ENCODE measurements at regions of chr10 and their contacts with region 1.

Region 1: GRCh38 chr10:97037365-97038361 is 148.1 kb downstream of the SLIT1 start:
- DNase-seq: peak; percentile 95
- ATAC-seq: peak; percentile 94
- H3K4me3 Mint-ChIP-seq: peak overlapping the region; percentile 45
- H3K27ac Mint-ChIP-seq: no peak overlapping the region
- H3K4me1 Mint-ChIP-seq: peaks cover 28% of the 10 kb centered on the region
- H3K27me3 Mint-ChIP-seq: peaks cover 5% of the 10 kb centered on the region
- CTCF ChIP-seq: peak; percentile 92

Region 2: GRCh38 chr10:96902731-96903358 is 134.8 kb before region 1 on chr10:
- CTCF ChIA-PET with region 1: no interaction called
- POLR2A ChIA-PET with region 1: no interaction called
- DNase-seq: no peak
- ATAC-seq: no peak
- H3K4me3 Mint-ChIP-seq: no peak overlapping the region
- H3K27ac Mint-ChIP-seq: no peak overlapping the region
- H3K4me1 Mint-ChIP-seq: peaks cover 30% of the 10 kb centered on the region
- H3K27me3 Mint-ChIP-seq: no peaks in the 10 kb centered on the region
- CTCF ChIP-seq: no peak

Region 3: DNA sequence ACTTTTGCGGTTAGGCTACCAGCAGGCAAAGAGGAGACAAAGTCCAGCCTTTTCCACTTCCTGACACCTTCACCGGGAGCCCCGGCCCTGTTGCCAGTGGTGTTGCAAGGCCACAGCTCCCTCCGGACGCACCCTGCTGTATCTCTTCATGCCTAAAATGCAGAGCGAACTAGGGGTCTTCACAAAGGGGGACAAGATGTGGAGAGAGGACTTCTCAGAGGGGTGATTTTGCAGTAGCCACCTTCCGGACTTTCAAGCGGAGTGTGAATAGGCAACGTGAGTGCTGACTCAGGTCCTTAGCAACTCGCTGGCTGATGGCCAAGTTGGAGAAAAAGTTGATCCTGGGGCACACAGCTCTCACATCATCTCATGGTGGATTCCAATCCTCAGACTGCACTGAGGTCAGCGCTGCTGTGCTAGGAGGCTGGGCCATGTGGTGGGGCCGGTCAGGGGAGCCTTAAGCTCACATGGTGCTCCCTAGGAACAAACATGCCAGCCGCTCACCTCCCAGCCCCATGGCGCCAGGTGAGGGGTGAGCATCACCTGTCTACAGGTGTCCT is 39.3 kb before region 1 on chr10:
- CTCF ChIA-PET with region 1: interaction called, 11 read pairs
- POLR2A ChIA-PET with region 1: no interaction called
- DNase-seq: no peak
- ATAC-seq: no peak
- H3K4me3 Mint-ChIP-seq: no peak overlapping the region
- H3K27ac Mint-ChIP-seq: no peak overlapping the region
- H3K4me1 Mint-ChIP-seq: no peaks in the 10 kb centered on the region
- H3K27me3 Mint-ChIP-seq: no peaks in the 10 kb centered on the region
- CTCF ChIP-seq: no peak

Region 4: GRCh38 chr10:97016728-97017473 is 20.8 kb before region 1 on chr10:
- CTCF ChIA-PET with region 1: interaction called, 18 read pairs
- POLR2A ChIA-PET with region 1: no interaction called
- DNase-seq: no peak
- ATAC-seq: no peak
- H3K4me3 Mint-ChIP-seq: no peak overlapping the region
- H3K27ac Mint-ChIP-seq: no peak overlapping the region
- H3K4me1 Mint-ChIP-seq: peaks cover 11% of the 10 kb centered on the region
- H3K27me3 Mint-ChIP-seq: no peaks in the 10 kb centered on the region
- CTCF ChIP-seq: no peak

Region 5: DNA sequence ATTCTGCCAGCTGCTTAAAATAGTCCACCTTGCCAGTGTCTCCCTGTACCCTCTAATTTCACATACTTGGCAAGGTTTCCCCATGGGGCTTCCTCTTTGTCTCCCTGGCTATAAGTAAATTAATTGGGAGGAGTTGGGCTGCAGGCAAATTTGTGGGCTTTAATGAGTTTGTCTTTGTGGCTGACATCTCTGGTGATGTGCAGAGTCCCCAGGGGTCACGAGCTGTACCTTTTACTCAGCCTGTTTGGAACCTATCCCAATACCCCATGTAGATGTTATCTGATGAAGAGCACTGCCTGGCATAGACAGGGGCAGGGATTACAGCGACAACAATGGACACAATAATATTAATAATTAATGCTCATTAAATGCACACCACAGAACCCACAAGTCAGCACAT is 15.6 kb after region 1 on chr10:
- CTCF ChIA-PET with region 1: interaction called, 10 read pairs
- POLR2A ChIA-PET with region 1: no interaction called
- DNase-seq: no peak
- ATAC-seq: no peak
- H3K4me3 Mint-ChIP-seq: no peak overlapping the region
- H3K27ac Mint-ChIP-seq: no peak overlapping the region
- H3K4me1 Mint-ChIP-seq: 0 out of 2 replicates have a peak, but pooled peaks cover 3% of the 10 kb centered on the region
- H3K27me3 Mint-ChIP-seq: no peaks in the 10 kb centered on the region
- CTCF ChIP-seq: no peak

Region 6: DNA sequence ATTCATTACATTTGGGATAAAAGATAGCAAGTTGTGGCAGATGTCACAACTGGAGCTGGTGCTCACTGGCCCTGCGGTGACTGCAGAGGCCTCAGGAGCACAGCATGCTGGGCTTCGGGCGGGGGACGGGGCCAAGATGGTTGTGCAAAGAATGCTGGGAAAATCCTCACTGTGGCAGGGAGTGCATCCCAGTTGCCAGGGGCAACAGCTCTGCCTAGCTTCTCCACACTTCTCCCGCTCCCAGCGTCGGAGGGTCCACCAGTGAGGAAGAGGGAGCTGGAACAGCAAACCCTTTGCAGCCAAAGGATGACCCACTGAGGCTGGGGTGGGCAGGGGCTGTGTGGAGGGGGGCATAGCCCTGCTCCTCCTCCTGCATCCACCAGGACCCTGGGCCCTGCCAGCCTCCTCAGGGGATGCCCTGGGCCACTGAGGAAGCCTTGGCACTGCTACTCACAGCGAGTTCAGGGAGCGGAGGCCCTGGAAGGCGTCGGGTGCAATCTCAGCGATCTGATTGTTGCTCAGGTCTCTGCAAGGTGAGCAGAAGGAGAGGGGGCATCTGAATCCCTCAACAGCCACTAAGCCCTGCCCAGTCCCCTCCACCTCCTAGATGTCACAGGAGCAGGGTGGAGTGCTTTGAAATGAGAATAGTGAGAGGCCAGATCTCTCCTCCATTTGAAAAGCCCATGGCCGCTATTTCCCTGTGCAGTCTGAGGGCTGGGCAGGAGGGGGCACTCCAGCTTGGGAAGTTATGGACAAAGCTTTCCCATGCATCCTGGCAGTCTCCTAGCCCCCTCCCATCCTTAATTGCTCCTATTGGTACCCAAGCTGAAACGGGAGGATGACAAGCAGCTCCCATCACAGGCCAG is 21.6 kb after region 1 on chr10:
- CTCF ChIA-PET with region 1: interaction called, 23 read pairs
- POLR2A ChIA-PET with region 1: no interaction called
- DNase-seq: peak; percentile 66
- ATAC-seq: peak; percentile 89
- H3K4me3 Mint-ChIP-seq: no peak overlapping the region
- H3K27ac Mint-ChIP-seq: no peak overlapping the region
- H3K4me1 Mint-ChIP-seq: peaks cover 8% of the 10 kb centered on the region
- H3K27me3 Mint-ChIP-seq: no peaks in the 10 kb centered on the region
- CTCF ChIP-seq: no peak

Measured in WTC11 (cell line).